ENCODE measurements at regions of chr19 and their contacts with region 1.

Region 1: DNA sequence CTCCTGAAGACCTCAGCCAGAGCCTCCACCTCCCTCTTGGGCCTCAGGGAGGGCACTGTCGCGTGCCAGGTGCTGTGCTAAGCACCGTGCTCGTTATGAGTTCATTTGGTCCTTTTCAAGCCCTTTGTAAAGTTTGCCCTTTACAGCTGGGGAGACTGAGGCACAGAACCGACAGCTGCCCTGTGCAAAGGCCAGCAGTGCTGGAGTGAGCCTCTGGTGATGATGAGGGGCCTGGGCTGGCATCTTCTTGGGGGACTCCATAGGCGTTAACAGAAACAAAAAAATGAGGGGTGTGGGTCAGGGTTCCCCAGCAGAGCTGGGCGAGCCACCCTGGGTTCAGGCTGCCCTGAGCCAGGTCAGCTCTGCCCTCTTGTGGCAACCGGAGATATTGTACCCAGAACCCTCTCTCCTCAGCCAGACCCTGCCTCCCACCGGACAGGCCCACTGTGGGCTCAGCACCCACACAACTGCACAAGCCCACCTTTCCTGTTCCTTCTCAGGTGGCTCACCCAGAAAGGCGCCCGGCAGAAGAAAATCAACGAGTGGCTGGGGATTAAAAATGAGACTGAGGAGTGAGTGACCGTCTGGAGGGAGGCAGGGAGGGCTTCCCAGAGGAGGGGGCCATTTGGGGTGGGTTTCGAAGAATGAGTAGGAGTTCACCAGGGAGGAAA is 5.5 kb upstream of the IFI30 start:
- DNase-seq: peak; percentile 91
- H3K4me3 Mint-ChIP-seq: no peak overlapping the region
- H3K27ac Mint-ChIP-seq: no peak overlapping the region
- H3K4me1 Mint-ChIP-seq: peaks cover 6% of the 10 kb centered on the region
- H3K27me3 Mint-ChIP-seq: no peaks in the 10 kb centered on the region

Region 2: DNA sequence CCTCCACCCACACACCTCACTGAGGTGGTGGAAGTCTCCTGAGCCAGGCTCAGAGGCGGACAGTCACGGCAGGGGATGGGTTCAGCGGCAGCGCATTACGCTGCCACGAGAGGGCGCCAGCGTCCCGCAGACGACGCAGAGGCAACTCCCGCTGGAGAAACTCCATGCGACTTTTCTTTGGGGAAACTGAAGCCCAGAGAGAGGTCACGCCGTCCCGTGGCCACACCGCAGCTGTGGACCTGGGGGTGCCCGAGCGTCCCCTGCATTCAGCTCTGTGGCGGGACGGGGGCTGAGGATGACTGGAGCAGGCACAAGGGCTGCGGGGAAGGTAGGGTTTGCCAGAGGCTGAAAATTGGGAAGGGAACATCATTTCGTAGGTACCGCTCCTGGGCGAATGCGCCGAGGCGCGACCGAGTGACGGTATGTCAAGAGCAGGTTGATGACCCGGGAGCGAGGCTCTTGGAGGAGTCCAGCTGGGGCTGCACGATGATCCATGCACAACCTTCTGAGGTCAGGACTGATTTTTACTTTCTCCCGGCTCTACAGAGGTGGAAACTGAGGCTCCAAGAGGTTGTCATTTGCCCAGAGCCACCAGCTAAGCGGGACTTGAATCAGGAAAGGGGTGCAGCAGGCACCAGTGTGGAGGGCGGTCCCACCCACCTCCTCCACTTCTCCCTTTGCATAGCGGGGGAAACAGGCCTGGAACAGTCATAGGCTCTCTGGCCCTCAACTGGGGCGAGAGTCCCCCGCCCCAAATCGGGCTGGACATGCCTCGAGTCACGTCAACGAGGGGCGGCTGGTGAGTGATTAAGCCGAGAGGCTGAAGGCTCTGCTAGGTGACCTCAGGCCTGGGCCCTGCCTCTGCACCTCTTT is 160.8 kb before region 1 on chr19:
- intact Hi-C with region 1: loop called (anchors 5 kb)
- DNase-seq: peak; percentile 96
- H3K4me3 Mint-ChIP-seq: peak overlapping the region; percentile 92
- H3K27ac Mint-ChIP-seq: peak overlapping the region; percentile 93
- H3K4me1 Mint-ChIP-seq: peaks cover 33% of the 10 kb centered on the region
- H3K27me3 Mint-ChIP-seq: no peaks in the 10 kb centered on the region

Region 3: GRCh38 chr19:18112989-18113478 is 55.1 kb before region 1 on chr19:
- intact Hi-C with region 1: loop called (anchors 2 kb)
- DNase-seq: peak; percentile 94
- H3K4me3 Mint-ChIP-seq: no peak overlapping the region
- H3K27ac Mint-ChIP-seq: peak overlapping the region; percentile 53
- H3K4me1 Mint-ChIP-seq: peaks cover 23% of the 10 kb centered on the region
- H3K27me3 Mint-ChIP-seq: no peaks in the 10 kb centered on the region